ENCODE measurements at regions of chr1 and their contacts with region 1.

Region 1: GRCh38 chr1:109466452-109467300 is at the start of gene SYPL2:
- DNase-seq: peak; percentile 67
- ATAC-seq: peak; percentile 89 to 91
- total RNA-seq, gene SYPL2: 12.3 to 15.4 TPM

Region 2: GRCh38 chr1:109432336-109432735 is 34.3 kb before region 1 on chr1:
- intact Hi-C with region 1: loop called in 1 of 2 experiments (anchors 5 kb)
- DNase-seq: no peak
- ATAC-seq: no peak